H1 (cell line): ENCODE measurements at regions of chr14 and their contacts with region 1.

Region 1: DNA sequence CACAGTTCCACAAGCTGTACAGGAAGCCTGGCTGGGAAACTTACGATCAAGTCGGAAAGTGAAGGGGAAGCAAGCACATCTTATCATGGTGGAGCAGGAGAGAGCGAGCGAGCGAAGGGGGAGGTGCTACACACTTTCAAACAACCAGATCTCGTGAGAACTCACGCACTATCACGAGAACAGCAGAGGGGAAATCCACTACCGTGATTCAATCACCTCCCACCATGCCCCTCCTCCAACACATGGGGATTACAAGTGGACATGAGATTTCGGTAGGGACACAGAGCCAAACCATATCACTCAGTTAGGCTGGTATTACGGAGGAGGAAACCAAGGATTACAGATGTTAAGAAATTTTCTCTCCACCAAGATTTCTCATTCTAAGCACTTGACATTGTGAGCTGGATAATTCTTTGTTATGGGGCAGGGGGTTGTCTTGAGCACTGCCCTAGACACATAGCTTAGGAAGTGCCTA is 262.0 kb upstream of the G2E3 start:
- DNase-seq: no peak
- H3K4me3 ChIP-seq: no peak overlapping the region
- H3K27ac ChIP-seq: no peak overlapping the region
- H3K4me1 ChIP-seq: no peaks in the 10 kb centered on the region; a peak in 1 of 7 replicates
- H3K27me3 ChIP-seq: no peaks in the 10 kb centered on the region
- CTCF ChIP-seq: no peak
- EP300 ChIP-seq: no peak
- POLR2A ChIP-seq: no peak
- RAD21 ChIP-seq: no peak

Region 2: GRCh38 chr14:29944091-29944490 is 352.9 kb before region 1 on chr14:
- CTCF ChIA-PET with region 1: no interaction called
- POLR2A ChIA-PET with region 1: no interaction called
- DNase-seq: no peak
- H3K4me3 ChIP-seq: no peak overlapping the region
- H3K27ac ChIP-seq: no peak overlapping the region
- H3K4me1 ChIP-seq: peaks cover 0 to 6% (median 4%) of the 10 kb centered on the region in 4 experiments; a peak in 3 of 7 replicates
- H3K27me3 ChIP-seq: peaks cover 0 to 9% (median 4%) of the 10 kb centered on the region in 4 experiments; a peak in 4 of 7 replicates
- CTCF ChIP-seq: no peak
- EP300 ChIP-seq: no peak
- POLR2A ChIP-seq: no peak
- RAD21 ChIP-seq: no peak

Region 3: GRCh38 chr14:30283826-30284446 is 13.0 kb before region 1 on chr14:
- CTCF ChIA-PET with region 1: interaction called, 22 read pairs
- POLR2A ChIA-PET with region 1: no interaction called
- DNase-seq: peak; percentile 34 to 77
- H3K4me3 ChIP-seq: no peak overlapping the region
- H3K27ac ChIP-seq: no peak overlapping the region
- H3K4me1 ChIP-seq: no peaks in the 10 kb centered on the region
- H3K27me3 ChIP-seq: no peaks in the 10 kb centered on the region
- CTCF ChIP-seq: peak in 2 of 3 experiments; percentile 73 to 80; a peak in 3 of 4 replicates
- EP300 ChIP-seq: no peak
- POLR2A ChIP-seq: no peak
- RAD21 ChIP-seq: peak; percentile 62 to 70